Common myeloid progenitor, CD34-positive (primary cell): ENCODE measurements at regions of chr3 and their contacts with region 1.

Region 1: GRCh38 chr3:117524890-117525289 is 815.3 kb downstream of the TUSC7 start:
- DNase-seq: no peak
- H3K4me3 ChIP-seq: no peak overlapping the region
- H3K27ac ChIP-seq: no peak overlapping the region
- H3K4me1 ChIP-seq: no peaks in the 10 kb centered on the region
- H3K27me3 ChIP-seq: peaks cover 0 to 1% (median 0%) of the 10 kb centered on the region in 5 experiments

Region 2: DNA sequence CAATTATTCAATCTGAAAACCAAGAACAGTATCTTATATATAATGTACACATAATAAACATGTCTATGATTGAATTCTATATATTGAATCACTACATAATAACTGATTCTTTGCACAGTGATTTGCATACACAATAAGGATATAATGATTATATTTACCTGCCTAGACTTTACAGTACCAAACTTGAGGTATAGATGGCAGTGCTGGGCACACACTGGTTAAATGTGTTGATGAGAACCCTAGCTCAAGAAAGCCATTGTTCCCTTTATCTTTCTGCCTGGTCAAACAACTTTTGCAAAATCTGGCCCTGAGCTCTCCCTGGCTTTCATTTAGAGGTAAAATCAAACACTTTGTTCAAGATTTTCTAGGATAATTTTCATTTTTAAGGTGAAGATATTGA is 117.6 kb before region 1 on chr3:
- CTCF ChIA-PET with region 1: interaction called, 12 read pairs
- POLR2A ChIA-PET with region 1: no interaction called
- DNase-seq: peak; percentile 33 to 63 (median 63)
- H3K4me3 ChIP-seq: no peak overlapping the region
- H3K27ac ChIP-seq: no peak overlapping the region
- H3K4me1 ChIP-seq: peaks cover 10 to 51% (median 31%) of the 10 kb centered on the region in 4 experiments
- H3K27me3 ChIP-seq: no peaks in the 10 kb centered on the region

Region 3: DNA sequence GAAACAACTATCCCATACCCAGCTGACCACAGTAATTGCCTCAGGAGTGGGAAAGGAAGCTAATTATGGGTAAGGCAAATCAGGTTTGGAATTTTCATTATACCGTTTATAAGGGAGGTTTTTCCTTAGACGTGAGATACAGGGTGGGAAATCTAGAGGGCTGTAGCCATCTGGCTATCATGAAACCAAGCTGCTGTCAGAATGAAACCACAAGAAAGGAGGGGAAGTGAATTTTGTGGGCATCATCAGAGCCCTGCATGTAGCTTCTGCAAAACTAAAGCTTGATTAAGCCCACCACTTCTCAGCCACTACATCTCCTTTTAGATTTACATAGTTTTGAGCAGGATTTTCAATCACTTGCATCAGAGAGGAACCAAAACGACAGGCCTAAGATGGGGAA is 78.2 kb after region 1 on chr3:
- CTCF ChIA-PET with region 1: no interaction called
- POLR2A ChIA-PET with region 1: no interaction called
- DNase-seq: peak; percentile 27 to 85 (median 82)
- H3K4me3 ChIP-seq: no peak overlapping the region
- H3K27ac ChIP-seq: no peak overlapping the region
- H3K4me1 ChIP-seq: peaks cover 0 to 2% (median 0%) of the 10 kb centered on the region in 4 experiments
- H3K27me3 ChIP-seq: peaks cover 0 to 7% (median 2%) of the 10 kb centered on the region in 5 experiments